ENCODE measurements at regions of chr15 and their contacts with region 1.

Region 1: GRCh38 chr15:56365075-56365711 is at the start of gene TEX9:
- DNase-seq: peak; percentile 76
- H3K4me3 Mint-ChIP-seq: peak within 1 kb of the TSS; percentile 85
- H3K27ac Mint-ChIP-seq: no peak within 1 kb of the TSS
- H3K4me1 Mint-ChIP-seq: peaks cover 16% of the 10 kb centered on the region
- H3K27me3 Mint-ChIP-seq: peaks cover 45% of the 10 kb centered on the region
- total RNA-seq, gene TEX9: 0.27 and 0.44 TPM in 2 replicates

Region 2: DNA sequence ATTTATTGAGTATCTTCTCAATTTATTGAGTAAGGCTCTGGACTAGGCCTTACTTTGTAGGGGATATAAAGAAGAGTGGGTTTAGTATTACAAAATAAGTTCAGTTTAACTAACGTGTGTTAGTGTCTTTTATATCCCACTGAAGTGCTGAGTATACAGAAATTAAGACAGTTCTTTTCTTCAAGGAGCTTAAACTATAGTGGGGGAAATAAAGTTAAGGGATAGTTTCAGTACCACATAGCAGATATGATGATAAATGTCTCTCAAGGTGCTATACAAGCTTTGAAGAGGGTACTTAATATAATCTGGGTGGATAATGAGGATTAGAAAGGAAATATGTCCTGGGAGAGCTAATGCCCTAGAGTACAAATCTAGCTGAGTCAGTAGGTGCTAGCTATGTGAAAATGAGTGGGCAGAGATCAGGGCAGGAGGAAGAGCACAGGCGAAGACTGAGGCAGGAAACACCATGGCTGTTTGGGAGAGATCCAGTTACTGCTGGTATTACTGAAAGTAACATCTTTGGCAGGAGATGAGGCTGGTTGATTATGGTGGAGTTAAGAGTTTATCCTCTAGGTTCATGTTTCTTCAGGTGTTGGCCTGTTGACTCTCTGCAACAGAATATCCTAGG is 46.0 kb after region 1 on chr15:
- intact Hi-C with region 1: loop called (anchors 10 kb)
- DNase-seq: no peak
- H3K4me3 Mint-ChIP-seq: no peak overlapping the region
- H3K27ac Mint-ChIP-seq: no peak overlapping the region
- H3K4me1 Mint-ChIP-seq: peaks cover 4% of the 10 kb centered on the region
- H3K27me3 Mint-ChIP-seq: peaks cover 2% of the 10 kb centered on the region

Region 3: DNA sequence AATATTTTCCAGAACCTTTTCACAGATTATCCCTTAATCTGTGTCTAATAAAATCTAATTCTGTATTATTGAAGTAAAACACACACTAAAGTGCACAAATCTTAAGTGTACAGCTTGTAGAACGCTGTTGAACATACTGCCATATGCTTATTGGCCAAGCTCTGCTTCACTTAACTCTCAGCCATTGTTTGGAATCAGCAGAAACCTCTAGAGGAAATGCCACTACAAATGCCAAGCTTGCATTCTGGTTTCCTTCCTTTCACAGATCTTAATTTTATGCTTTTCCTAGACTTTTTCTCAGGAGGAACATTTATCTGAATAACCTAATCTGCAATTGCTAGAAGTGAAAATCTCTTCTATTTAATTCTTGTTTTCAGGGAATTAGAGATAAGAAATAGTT is 89.6 kb after region 1 on chr15:
- intact Hi-C with region 1: no loop called
- DNase-seq: no peak
- H3K4me3 Mint-ChIP-seq: no peak overlapping the region
- H3K27ac Mint-ChIP-seq: no peak overlapping the region
- H3K4me1 Mint-ChIP-seq: no peaks in the 10 kb centered on the region
- H3K27me3 Mint-ChIP-seq: peaks cover 13% of the 10 kb centered on the region

Measured in activated T-helper 2 cell treated with anti-CD3 and anti-CD28 coated beads, Interferon-gamma antibody, Interleukin-2, Interleukin-4, amounts not matched to agents 10 μg/mL and 5 μg/mL and 100 μg/mL, durations not matched to agents 14 hours and 24 hours and 36 hours (primary cell).